ENCODE measurements at regions of chr1 and their contacts with region 1.

Region 1: DNA sequence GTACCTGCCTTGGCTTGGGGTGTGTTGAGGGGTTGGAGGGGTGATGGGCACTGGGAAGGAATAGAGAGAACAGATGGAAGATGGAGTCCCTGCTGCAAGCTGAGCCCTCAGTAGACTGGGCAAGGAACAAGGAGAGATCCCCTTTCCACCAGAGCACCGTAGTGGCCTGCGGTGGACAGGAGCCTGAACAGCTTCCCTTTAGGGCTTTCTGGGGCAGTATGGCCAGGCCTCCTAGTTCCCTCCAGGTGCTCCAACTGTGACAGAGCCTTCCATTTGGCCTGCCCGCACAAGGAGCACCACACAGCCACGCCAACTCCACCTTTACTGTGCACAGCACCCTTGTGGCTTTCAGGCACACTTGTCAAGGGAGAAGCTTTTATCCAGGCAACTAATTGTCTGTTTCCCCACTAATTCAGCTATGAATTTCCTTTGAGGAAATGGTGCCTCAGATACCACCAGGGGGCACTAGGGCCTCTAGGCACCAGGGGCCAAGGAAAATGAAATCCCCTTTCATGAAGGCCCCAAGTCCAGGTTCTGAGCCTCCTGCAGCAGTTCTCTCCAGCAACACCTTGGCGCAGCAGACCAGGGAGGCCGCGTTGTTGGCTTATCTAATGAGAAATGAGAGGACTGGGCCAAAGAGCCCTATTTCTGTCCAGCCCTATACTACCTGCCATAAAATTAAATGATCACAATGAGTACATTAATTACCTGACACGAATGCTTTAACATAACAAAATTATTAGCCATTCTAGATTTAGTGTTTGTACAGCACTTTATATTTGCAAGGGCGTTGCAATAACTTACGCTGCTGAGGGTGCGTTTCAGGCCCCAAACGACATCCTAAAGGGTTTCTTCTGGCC is 23.1 kb upstream of the ERI3 start:
- DNase-seq: peak; percentile 76
- ATAC-seq: peak; percentile 85
- H3K4me3 Mint-ChIP-seq: no peak overlapping the region
- H3K27ac Mint-ChIP-seq: no peak overlapping the region
- H3K4me1 Mint-ChIP-seq: peaks cover 15% of the 10 kb centered on the region
- H3K27me3 Mint-ChIP-seq: peaks cover 4% of the 10 kb centered on the region
- CTCF ChIP-seq: peak; percentile 63

Region 2: DNA sequence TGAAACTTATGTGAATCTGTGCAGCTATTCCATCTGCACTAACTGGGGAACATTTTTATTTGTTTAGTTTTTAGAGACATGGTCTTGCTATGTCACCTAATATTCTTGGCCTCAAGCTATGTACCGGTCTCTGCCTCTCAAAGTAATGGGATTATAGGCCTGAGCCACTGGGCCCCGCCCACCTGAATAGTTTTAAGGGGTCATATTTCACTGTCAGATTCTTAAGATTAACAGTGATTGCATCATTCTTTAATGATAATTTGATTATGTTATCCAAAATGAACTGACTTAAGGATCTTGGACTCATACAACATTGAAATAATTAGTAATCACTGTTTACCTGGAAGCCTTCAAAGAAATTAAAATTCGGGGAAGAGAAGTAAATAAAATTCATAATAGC is 224.1 kb before region 1 on chr1:
- CTCF ChIA-PET with region 1: no interaction called
- POLR2A ChIA-PET with region 1: no interaction called
- DNase-seq: peak; percentile 41
- ATAC-seq: peak; percentile 39; the same call in 1 of the 2 replicates
- H3K4me3 Mint-ChIP-seq: no peak overlapping the region
- H3K27ac Mint-ChIP-seq: no peak overlapping the region; the same call in 1 of the 2 replicates
- H3K4me1 Mint-ChIP-seq: peaks cover 18% of the 10 kb centered on the region
- H3K27me3 Mint-ChIP-seq: peaks cover 10% of the 10 kb centered on the region; the same call in 1 of the 2 replicates
- CTCF ChIP-seq: no peak

Region 3: DNA sequence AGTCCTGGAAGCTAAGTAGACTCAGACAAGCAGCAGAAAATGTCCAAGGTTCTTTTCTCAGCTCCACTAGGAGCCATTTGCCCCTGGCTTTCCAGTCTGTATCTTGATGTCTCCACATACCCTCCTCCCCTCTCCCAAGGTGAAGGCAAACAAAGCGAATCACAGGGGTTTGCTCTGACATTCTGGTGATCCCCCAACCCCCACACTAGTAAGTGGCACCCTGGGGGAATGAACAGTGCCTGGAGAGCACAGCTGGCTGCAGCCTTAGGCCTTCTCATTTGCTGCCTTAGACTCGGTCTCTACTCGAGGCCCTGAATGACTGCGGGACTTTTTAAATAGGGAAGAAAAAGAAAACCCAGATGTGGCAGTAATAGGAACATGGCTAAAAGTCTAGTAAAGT is 38.4 kb before region 1 on chr1:
- CTCF ChIA-PET with region 1: interaction called, 11 read pairs
- POLR2A ChIA-PET with region 1: no interaction called
- DNase-seq: no peak
- ATAC-seq: peak; percentile 87
- H3K4me3 Mint-ChIP-seq: no peak overlapping the region
- H3K27ac Mint-ChIP-seq: no peak overlapping the region
- H3K4me1 Mint-ChIP-seq: peaks cover 29% of the 10 kb centered on the region
- H3K27me3 Mint-ChIP-seq: no peaks in the 10 kb centered on the region
- CTCF ChIP-seq: no peak

Region 4: DNA sequence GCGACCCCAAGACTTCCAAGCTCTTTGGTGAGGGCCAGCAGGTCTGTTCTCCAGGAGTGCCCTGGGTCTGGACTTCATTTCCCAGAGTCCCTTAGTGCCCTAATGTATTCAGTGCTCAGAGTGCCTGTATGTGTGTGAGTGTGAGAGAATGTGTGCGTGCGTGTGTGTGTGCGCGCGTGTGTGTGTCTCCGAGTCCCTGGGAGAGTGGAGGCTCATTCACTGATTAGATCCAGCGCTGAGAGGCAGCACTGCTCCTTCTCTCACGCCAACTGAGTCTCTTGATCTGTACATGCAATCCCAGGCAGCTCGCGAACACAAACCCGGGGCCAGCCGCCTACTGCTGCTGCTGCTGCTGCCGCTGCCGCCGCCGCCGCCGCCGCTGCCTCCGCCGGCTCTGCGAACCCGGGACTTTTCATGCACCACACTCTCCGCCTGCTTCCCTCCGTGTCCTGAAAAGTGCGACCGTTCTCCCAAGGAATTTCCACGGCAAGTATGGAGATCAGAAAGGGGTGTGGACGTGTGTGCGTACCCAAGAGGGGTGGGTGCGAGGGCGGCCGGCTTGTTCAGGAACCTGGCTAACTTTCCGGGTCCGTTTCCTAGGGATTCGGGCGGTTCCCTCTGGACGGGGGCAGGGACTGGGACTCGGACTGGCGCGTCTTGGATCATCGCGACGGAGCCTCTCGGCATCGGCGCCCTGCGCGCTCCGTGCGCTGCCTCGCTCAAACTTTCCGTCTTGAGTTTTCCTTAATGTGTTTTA is 27.1 kb after region 1 on chr1 and contains the start of gene RNF220:
- CTCF ChIA-PET with region 1: interaction called, 19 read pairs
- POLR2A ChIA-PET with region 1: interaction called, 3 read pairs
- DNase-seq: peak; percentile 69
- ATAC-seq: peak; percentile 74
- H3K4me3 Mint-ChIP-seq: peak within 1 kb of the TSS; percentile 95
- H3K27ac Mint-ChIP-seq: peak within 1 kb of the TSS; percentile 96
- H3K4me1 Mint-ChIP-seq: 0 out of 2 replicates have a peak, but pooled peaks cover 3% of the 10 kb centered on the region
- H3K27me3 Mint-ChIP-seq: peaks cover 20% of the 10 kb centered on the region
- CTCF ChIP-seq: no peak
- total RNA-seq, gene RNF220: 117 to 128 TPM (median 124 TPM) in 3 replicates

Region 5: GRCh38 chr1:44476891-44477290 is 98.7 kb after region 1 on chr1:
- CTCF ChIA-PET with region 1: interaction called, 14 read pairs
- POLR2A ChIA-PET with region 1: no interaction called
- DNase-seq: no peak
- ATAC-seq: no peak
- H3K4me3 Mint-ChIP-seq: no peak overlapping the region
- H3K27ac Mint-ChIP-seq: peak overlapping the region; percentile 76
- H3K4me1 Mint-ChIP-seq: peaks cover 29% of the 10 kb centered on the region
- H3K27me3 Mint-ChIP-seq: no peaks in the 10 kb centered on the region
- CTCF ChIP-seq: no peak

Region 6: DNA sequence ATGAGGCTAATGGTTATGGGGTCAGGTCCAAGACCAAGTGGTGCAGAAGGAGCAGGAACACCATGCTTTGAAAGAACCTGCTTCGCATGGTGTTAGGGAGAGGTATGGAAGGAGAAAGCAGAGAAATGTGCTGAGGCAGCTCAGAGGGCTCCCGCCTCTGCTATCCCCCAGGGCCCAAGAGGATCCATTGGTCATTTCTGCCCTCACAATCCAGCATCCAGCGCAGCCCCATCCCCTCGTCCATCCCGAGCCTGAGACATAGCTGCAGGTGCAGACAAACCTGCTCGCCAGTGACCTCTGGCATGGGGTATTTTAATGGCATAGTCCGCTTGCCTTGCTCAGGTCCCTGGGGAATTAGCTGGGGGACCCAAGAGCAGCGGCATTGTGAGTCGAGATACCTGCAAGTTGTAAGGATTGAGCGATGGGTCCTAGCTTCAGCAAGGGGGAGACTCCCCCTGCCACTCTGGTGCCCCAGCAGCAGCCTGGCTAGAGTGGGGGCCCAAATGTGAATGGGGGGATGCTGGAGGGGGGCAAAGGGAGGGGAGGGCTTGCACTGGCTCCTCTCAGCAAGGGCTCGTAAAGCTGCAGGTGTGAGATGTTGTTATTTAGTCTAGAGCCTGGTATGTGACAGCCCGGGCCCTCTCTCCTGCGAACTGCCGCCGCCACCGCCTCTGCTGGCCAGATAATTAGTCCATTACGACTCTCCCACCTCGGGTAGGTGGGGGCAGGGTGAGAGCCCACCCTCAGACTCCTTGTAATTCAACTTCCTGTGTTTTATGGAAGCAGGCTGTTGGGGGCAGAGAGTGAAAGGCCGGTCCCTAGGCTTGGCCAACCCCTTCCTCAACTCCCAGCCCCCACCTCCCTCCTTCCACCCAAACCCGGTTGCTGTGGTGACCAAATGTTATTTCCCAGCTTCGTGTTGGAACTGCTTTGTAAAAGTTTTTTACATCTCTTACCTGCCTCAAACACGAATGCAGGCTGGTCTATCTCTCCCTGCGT is 145.7 kb after region 1 on chr1:
- CTCF ChIA-PET with region 1: interaction called, 16 read pairs
- POLR2A ChIA-PET with region 1: interaction called, 7 read pairs
- DNase-seq: peak; percentile 76
- ATAC-seq: peak; percentile 95
- H3K4me3 Mint-ChIP-seq: no peak overlapping the region
- H3K27ac Mint-ChIP-seq: peak overlapping the region; percentile 86
- H3K4me1 Mint-ChIP-seq: peaks cover 26% of the 10 kb centered on the region
- H3K27me3 Mint-ChIP-seq: no peaks in the 10 kb centered on the region
- CTCF ChIP-seq: no peak

Region 7: DNA sequence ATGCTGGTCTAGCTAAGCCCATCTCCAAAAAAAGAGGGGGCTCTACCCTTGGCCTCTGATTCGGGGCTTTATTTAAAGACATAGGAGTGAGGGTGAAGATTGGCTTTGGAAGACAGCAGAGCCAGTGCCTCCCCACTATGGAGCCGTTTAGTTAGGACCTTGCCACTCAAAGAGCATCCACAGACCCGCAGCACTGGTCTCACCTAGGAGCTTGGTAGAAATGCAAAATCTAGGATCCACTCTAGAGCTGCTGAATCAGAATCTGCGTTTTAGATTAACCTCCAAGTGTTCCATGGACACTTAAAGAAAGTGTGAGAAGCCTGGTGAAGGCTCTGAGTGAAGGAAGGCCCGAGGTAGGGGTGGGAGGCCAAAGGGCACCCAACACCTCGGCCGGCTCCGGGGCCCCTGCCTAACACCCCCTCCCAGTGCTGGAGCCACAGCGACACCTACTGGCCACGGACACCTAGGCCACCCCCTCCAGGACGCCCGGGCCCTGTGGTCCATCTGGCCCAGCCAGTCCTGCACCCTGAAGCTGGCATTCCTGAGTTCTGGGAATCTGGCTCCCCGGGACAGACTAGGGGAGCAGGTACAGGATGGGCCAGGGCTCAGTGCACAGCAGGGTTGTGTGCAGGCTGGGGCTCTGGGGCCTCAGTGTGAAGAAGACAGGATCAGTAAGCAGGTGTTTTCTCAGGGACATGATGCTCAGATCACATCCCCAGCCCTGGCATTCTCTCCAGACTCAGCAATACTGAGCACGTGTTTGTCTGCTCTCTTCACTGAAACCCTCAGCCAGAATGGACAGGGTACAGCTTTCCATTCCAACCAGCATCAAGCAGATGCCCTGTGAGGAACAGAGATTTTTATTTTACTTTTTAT is 217.0 kb after region 1 on chr1:
- CTCF ChIA-PET with region 1: interaction called, 131 read pairs
- POLR2A ChIA-PET with region 1: no interaction called
- DNase-seq: peak; percentile 95
- ATAC-seq: peak; percentile 87
- H3K4me3 Mint-ChIP-seq: no peak overlapping the region
- H3K27ac Mint-ChIP-seq: no peak overlapping the region
- H3K4me1 Mint-ChIP-seq: peaks cover 29% of the 10 kb centered on the region
- H3K27me3 Mint-ChIP-seq: peaks cover 2% of the 10 kb centered on the region; the same call in 1 of the 2 replicates
- CTCF ChIP-seq: peak; percentile 98

Region 8: GRCh38 chr1:44652445-44653106 is 274.4 kb after region 1 on chr1:
- CTCF ChIA-PET with region 1: interaction called, 39 read pairs
- POLR2A ChIA-PET with region 1: no interaction called
- DNase-seq: peak; percentile 93
- ATAC-seq: peak; percentile 81
- H3K4me3 Mint-ChIP-seq: no peak overlapping the region
- H3K27ac Mint-ChIP-seq: peak overlapping the region; percentile 72
- H3K4me1 Mint-ChIP-seq: peaks cover 26% of the 10 kb centered on the region
- H3K27me3 Mint-ChIP-seq: no peaks in the 10 kb centered on the region
- CTCF ChIP-seq: peak; percentile 94

Measured in WTC11 (cell line).